PC-3 (cell line): ENCODE measurements at regions of chr7 and their contacts with region 1.

Region 1: GRCh38 chr7:112495810-112496462 is 15.1 kb downstream of the LSMEM1 start:
- DNase-seq: peak; percentile 69
- ATAC-seq: peak; percentile 97
- H3K4me3 ChIP-seq: no peak overlapping the region
- H3K27ac ChIP-seq: no peak overlapping the region
- H3K4me1 ChIP-seq: no peaks in the 10 kb centered on the region
- H3K27me3 ChIP-seq: no peaks in the 10 kb centered on the region
- CTCF ChIP-seq: peak; percentile 89

Region 2: DNA sequence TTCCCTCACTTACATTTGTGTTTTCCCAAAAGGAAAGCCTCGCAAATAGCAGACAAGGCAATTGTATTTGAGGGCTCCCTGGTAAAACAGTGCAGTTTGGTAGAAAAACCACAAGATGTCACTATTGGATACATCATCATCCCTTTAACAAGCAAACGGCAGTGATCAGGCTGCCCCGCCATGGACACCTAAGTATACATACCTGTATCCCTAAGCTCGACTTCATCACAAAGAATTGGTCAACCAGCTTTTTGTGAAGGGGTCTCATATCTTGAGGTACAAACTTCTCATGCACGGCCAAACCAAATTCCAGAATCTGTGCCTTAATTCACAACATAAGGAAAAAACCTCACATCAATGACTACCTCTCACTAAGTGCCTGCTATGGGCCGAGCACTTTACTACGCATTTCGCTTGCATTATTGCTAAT is 754.1 kb before region 1 on chr7:
- CTCF ChIA-PET with region 1: no interaction called
- POLR2A ChIA-PET with region 1: no interaction called
- intact Hi-C with region 1: loop called (anchors 1 kb)
- DNase-seq: peak; percentile 78
- ATAC-seq: peak; percentile 86
- H3K4me3 ChIP-seq: no peak overlapping the region
- H3K27ac ChIP-seq: no peak overlapping the region
- H3K4me1 ChIP-seq: peaks cover under 1% of the 10 kb centered on the region; the same call in 1 of the 2 replicates
- H3K27me3 ChIP-seq: no peaks in the 10 kb centered on the region
- CTCF ChIP-seq: peak; percentile 81

Region 3: DNA sequence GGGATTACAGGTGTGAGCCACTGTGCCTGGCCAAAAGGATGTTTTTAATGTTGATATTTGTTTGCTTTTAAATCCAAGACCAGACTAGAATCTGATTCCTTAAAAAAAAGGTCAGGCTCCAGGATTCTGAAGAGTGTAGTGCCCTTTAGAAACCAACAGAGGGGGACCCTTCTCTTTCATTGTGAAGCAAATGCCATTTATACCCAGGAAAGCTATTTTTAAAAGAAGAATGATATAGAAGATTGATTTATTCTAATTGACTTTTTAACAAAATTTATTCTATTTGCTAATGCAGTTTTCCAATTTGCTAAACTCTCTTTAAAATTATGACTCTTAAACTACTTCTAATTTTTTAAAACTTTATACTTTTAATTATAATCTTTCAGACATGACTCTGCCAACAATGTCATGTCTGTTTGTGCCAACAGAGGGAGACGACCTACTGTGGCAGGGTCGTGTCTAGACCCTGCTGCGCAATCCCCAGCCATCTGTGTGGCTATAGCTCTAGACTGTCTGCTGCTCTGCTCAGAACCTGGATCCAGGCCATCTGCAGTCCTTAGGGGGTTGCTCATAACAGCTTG is 732.6 kb before region 1 on chr7:
- CTCF ChIA-PET with region 1: interaction called, 8 read pairs
- POLR2A ChIA-PET with region 1: no interaction called
- intact Hi-C with region 1: loop called (anchors 5 kb)
- DNase-seq: peak; percentile 55
- ATAC-seq: peak; percentile 84
- H3K4me3 ChIP-seq: no peak overlapping the region
- H3K27ac ChIP-seq: no peak overlapping the region
- H3K4me1 ChIP-seq: peaks cover 6% of the 10 kb centered on the region
- H3K27me3 ChIP-seq: no peaks in the 10 kb centered on the region
- CTCF ChIP-seq: peak; percentile 71

Region 4: GRCh38 chr7:112422842-112423496 is 73.0 kb before region 1 on chr7:
- CTCF ChIA-PET with region 1: interaction called, 4 read pairs
- POLR2A ChIA-PET with region 1: no interaction called
- intact Hi-C with region 1: loop called (anchors 2 kb)
- DNase-seq: peak; percentile 98
- ATAC-seq: peak; percentile 95
- H3K4me3 ChIP-seq: peak overlapping the region; percentile 30; the same call in 1 of the 2 replicates
- H3K27ac ChIP-seq: peak overlapping the region; percentile 70
- H3K4me1 ChIP-seq: peaks cover 37% of the 10 kb centered on the region
- H3K27me3 ChIP-seq: no peaks in the 10 kb centered on the region
- CTCF ChIP-seq: no peak

Region 5: GRCh38 chr7:112481833-112482670 is 13.9 kb before region 1 on chr7:
- CTCF ChIA-PET with region 1: interaction called, 18 read pairs
- POLR2A ChIA-PET with region 1: no interaction called
- intact Hi-C with region 1: loop called (anchors 1 kb)
- DNase-seq: peak; percentile 85
- ATAC-seq: peak; percentile 78
- H3K4me3 ChIP-seq: no peak overlapping the region
- H3K27ac ChIP-seq: peak overlapping the region; percentile 89
- H3K4me1 ChIP-seq: peaks cover 43% of the 10 kb centered on the region
- H3K27me3 ChIP-seq: no peaks in the 10 kb centered on the region
- CTCF ChIP-seq: no peak

Region 6: GRCh38 chr7:112898432-112899290 is 402.7 kb after region 1 on chr7:
- CTCF ChIA-PET with region 1: interaction called, 3 read pairs
- POLR2A ChIA-PET with region 1: no interaction called
- intact Hi-C with region 1: loop called (anchors 5 kb)
- DNase-seq: peak; percentile 78
- ATAC-seq: peak; percentile 91
- H3K4me3 ChIP-seq: no peak overlapping the region
- H3K27ac ChIP-seq: no peak overlapping the region
- H3K4me1 ChIP-seq: no peaks in the 10 kb centered on the region
- H3K27me3 ChIP-seq: no peaks in the 10 kb centered on the region
- CTCF ChIP-seq: peak; percentile 85

Region 7: DNA sequence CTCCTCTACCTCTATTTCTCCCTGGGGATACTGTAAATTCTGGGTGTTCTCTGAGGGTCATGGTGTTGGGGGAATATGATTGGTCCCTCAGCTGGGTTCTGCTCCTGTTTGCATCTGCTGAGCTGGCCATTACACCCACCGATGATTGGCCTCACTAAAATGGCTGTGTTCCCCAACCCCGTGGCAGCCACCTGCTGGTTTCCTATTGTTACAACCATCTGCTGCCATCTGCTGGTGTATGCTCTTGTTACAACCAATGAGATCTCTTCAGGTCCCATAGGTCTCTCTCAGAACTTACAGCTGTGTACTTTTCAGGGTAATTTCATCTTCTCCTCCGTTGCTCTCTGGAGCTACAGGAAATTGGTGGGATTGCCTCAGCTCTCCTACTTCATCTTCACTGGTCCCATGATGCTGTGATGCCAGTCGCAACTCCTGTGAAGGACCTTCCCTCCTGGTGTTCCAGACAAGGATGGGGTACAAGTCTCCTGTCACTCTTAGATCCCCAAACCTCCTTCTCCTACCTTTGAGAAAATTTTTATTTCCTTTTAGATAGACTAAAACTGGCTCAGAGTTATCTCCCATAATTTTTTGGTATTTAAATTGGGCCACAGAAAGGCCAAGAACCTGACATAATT is 925.9 kb after region 1 on chr7:
- CTCF ChIA-PET with region 1: no interaction called
- POLR2A ChIA-PET with region 1: no interaction called
- intact Hi-C with region 1: loop called (anchors 2 kb)
- DNase-seq: peak; percentile 86
- ATAC-seq: peak; percentile 99
- H3K4me3 ChIP-seq: no peak overlapping the region
- H3K27ac ChIP-seq: no peak overlapping the region
- H3K4me1 ChIP-seq: no peaks in the 10 kb centered on the region; the same call in 1 of the 2 replicates
- H3K27me3 ChIP-seq: no peaks in the 10 kb centered on the region
- CTCF ChIP-seq: peak; percentile 89